Cardiac septum (tissue), 1 donor: ENCODE measurements at regions of chr1 and their contacts with region 1.

Region 1: DNA sequence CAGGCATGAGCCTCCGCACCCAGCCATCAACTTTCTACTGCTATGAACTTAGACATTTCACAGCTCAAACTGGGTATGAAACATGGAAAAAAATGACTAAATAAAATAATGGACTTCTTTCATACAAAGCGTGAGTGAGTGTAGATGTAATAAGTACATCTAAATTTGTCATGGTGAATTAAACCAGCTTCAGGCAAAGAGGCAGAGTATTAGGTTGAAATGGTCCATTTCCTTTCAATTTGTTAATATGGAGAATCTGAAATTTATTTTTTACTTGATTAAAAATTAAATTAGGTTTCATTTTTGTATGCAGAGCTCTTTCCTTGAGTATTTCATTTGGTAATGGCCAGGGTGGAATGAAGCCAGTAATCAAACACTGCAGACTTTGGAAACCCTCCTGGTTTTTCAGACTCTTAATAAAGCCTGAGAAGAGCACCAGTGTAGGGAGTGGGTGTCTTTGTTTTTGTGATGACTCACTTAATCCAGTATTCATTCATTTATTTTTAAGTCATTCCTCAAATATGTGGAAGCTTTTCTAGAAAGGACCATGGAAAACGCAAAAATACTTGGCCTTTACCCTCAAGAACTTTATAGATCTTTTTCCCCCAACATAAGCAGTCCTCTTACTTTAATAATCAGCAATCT is 49.2 kb downstream of the ALG14 start:
- DNase-seq: no peak

Region 2: GRCh38 chr1:94863919-94864318 is 159.6 kb before region 1 on chr1:
- intact Hi-C with region 1: loop called (anchors 5 kb)
- DNase-seq: no peak

Region 3: GRCh38 chr1:94980582-94981574 is 42.6 kb before region 1 on chr1:
- intact Hi-C with region 1: loop called (anchors 2 kb)
- DNase-seq: no peak